Activated B cell treated with CpG ODN at 0.5 μM for 24 hours (primary cell): ENCODE measurements at regions of chr11 and their contacts with region 1.

Region 1: GRCh38 chr11:9573052-9573774 is at the start of gene WEE1:
- DNase-seq: peak; percentile 97
- ATAC-seq: peak; percentile 90
- H3K4me3 Mint-ChIP-seq: peak within 1 kb of the TSS; percentile 95
- H3K27ac Mint-ChIP-seq: peak within 1 kb of the TSS; percentile 85
- H3K4me1 Mint-ChIP-seq: peaks cover 69% of the 10 kb centered on the region
- H3K27me3 Mint-ChIP-seq: no peaks in the 10 kb centered on the region
- CTCF ChIP-seq: no peak
- total RNA-seq, gene WEE1: 29.4 and 33.7 TPM in 2 replicates

Region 2: GRCh38 chr11:9103208-9103898 is 469.9 kb before region 1 on chr11:
- CTCF ChIA-PET with region 1: no interaction called
- POLR2A ChIA-PET with region 1: no interaction called
- intact Hi-C with region 1: no loop called
- DNase-seq: no peak
- ATAC-seq: no peak
- H3K4me3 Mint-ChIP-seq: no peak overlapping the region
- H3K27ac Mint-ChIP-seq: no peak overlapping the region
- H3K4me1 Mint-ChIP-seq: no peaks in the 10 kb centered on the region
- H3K27me3 Mint-ChIP-seq: peaks cover 22% of the 10 kb centered on the region
- CTCF ChIP-seq: no peak

Region 3: GRCh38 chr11:9293646-9294045 is 279.6 kb before region 1 on chr11:
- CTCF ChIA-PET with region 1: no interaction called
- POLR2A ChIA-PET with region 1: no interaction called
- intact Hi-C with region 1: no loop called
- DNase-seq: no peak
- ATAC-seq: no peak
- H3K4me3 Mint-ChIP-seq: no peak overlapping the region
- H3K27ac Mint-ChIP-seq: no peak overlapping the region
- H3K4me1 Mint-ChIP-seq: no peaks in the 10 kb centered on the region
- H3K27me3 Mint-ChIP-seq: no peaks in the 10 kb centered on the region
- CTCF ChIP-seq: no peak

Region 4: DNA sequence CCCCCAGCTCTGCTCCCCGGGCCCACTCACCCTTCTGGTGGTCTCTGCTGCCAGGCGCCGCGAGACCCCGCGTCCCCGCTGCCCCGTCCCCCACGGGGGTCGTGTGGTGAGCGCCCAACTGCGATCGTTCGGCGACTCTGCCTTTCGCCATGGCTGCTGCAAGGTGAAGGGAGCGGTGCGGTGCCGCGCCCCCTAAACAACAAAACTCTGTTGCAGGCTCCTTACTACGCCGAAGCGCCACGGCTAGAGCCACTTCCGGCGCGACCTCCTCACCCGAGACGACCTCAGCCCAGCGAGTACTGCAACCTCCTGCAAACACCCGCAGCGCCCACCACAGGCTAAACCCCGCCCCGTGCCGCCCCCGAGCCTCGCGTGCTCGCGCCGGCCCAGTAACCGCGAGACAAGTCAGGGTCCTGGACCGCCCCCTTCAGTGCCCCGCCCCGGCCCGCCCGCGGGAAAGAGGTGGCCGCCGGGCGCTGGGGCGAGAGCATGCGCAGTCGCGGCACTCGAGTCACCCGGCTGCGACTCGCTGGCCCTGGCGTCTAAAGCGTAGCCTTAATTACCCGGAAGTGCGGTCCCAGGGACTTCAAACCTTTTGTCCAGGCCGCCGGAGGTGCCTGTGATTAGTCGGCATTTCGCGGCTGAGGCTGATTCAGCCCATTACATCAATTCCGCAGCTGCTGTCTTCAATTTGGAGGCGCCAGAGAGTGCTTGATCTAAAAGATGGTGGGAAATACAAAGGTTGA is 258.7 kb before region 1 on chr11 and contains the start of gene TMEM41B:
- CTCF ChIA-PET with region 1: no interaction called
- POLR2A ChIA-PET with region 1: no interaction called
- intact Hi-C with region 1: loop called (anchors 10 kb)
- DNase-seq: peak; percentile 100
- ATAC-seq: peak; percentile 96
- H3K4me3 Mint-ChIP-seq: peak within 1 kb of the TSS; percentile 98
- H3K27ac Mint-ChIP-seq: peak within 1 kb of the TSS; percentile 95
- H3K4me1 Mint-ChIP-seq: peaks cover 49% of the 10 kb centered on the region
- H3K27me3 Mint-ChIP-seq: peaks cover 4% of the 10 kb centered on the region
- CTCF ChIP-seq: no peak
- total RNA-seq, gene TMEM41B: 19.4 and 21.7 TPM in 2 replicates

Region 5: DNA sequence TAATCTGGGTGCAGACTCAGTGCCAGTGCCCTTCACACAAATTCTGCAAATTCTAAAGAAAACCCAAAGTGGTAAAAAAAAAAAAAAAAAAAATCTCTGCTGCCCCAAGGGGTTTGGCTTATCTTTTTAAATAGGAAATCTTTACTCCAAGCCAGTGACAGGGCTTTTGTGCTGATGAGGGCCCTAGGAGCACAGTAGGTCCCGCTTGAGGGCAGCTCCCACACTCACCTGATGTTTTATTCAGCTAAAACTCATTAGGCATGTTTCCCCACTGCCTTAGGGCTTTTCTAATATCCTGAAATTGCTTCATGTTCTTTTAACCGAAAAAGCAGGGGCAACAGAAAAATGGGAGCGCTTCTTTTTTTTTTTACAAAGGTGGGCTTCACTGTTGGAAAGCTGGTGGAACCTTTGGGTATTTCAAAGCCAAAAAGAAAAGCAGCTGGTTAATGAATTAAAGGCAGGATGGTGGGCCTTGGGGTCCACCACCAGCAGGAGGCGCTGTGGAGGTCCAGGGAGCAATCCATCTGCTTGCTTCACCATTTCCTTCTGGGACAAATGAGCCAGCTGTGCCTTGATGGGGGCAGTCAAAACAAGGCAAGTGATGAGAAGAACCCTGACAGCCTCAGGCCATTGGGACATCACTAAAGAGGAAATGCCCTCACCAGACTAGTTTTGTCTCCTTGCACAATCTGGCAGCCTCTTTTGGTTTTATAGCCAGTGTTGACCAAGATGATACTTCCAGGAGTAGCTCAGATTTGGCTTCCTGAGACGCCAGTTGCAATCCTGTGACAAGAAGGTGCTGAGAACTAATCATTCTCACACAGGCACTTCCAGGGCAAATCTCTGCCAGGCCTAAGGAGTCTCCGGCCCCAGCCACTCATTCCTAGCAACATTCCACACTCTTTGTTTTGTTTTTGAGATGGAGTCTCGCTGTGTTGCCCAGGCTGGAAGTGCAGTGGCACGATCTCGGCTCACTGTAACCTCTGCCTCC is 38.1 kb before region 1 on chr11:
- CTCF ChIA-PET with region 1: interaction called, 18 read pairs
- POLR2A ChIA-PET with region 1: interaction called, 4 read pairs
- intact Hi-C with region 1: loop called (anchors 1 kb)
- DNase-seq: peak; percentile 71
- ATAC-seq: peak; percentile 71
- H3K4me3 Mint-ChIP-seq: no peak overlapping the region
- H3K27ac Mint-ChIP-seq: no peak overlapping the region
- H3K4me1 Mint-ChIP-seq: peaks cover 5% of the 10 kb centered on the region
- H3K27me3 Mint-ChIP-seq: no peaks in the 10 kb centered on the region
- CTCF ChIP-seq: no peak

Region 6: GRCh38 chr11:10899121-10899830 is 1326.1 kb after region 1 on chr11:
- CTCF ChIA-PET with region 1: no interaction called
- POLR2A ChIA-PET with region 1: no interaction called
- intact Hi-C with region 1: no loop called
- DNase-seq: no peak
- ATAC-seq: peak; percentile 38
- H3K4me3 Mint-ChIP-seq: no peak overlapping the region
- H3K27ac Mint-ChIP-seq: peak overlapping the region; percentile 15
- H3K4me1 Mint-ChIP-seq: peaks cover 20% of the 10 kb centered on the region
- H3K27me3 Mint-ChIP-seq: peaks cover 2% of the 10 kb centered on the region
- CTCF ChIP-seq: no peak